ENCODE measurements at regions of chr12 and their contacts with region 1.

Region 1: DNA sequence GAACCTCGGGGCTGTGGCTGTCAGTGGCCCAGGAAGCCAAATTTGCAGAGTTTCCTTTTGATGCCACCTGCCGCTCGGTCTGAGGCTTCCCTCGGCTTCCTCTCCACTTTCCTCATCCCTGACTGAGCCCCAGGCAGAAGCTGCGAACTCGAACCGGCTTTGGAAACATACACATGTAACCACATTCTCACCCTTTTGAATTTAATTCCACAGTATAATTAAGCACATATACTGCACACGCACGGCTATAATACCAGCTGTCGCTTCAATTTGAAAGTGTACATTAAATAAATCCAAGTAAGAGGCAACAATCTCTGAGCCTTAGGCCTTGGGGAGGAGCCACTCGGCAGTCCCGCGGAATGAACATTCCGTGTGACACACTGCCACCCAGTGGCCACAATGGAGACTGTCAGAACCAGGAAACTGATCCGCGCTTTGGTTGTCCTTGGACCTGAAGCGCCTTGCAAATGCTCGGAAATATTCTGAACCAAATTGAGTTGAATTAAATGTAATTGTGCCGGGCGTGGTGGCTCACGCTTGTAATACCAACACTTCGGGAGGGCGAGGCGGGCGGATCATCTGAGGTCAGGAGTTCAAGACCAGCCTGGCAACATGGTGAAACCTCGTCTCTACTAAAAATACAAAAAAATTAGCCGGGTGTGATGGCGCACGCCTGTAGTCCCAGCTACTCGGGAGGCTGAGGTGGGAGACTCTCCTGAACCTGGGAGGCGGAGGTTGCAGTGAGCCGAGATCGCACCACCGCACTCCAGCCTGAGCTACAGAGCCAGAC is 117.9 kb upstream of the TMPO start:
- DNase-seq: peak; percentile 95
- H3K4me3 Mint-ChIP-seq: peak overlapping the region; percentile 72
- H3K27ac Mint-ChIP-seq: peak overlapping the region; percentile 10
- H3K4me1 Mint-ChIP-seq: peaks cover 35% of the 10 kb centered on the region
- H3K27me3 Mint-ChIP-seq: peaks cover 6% of the 10 kb centered on the region

Region 2: DNA sequence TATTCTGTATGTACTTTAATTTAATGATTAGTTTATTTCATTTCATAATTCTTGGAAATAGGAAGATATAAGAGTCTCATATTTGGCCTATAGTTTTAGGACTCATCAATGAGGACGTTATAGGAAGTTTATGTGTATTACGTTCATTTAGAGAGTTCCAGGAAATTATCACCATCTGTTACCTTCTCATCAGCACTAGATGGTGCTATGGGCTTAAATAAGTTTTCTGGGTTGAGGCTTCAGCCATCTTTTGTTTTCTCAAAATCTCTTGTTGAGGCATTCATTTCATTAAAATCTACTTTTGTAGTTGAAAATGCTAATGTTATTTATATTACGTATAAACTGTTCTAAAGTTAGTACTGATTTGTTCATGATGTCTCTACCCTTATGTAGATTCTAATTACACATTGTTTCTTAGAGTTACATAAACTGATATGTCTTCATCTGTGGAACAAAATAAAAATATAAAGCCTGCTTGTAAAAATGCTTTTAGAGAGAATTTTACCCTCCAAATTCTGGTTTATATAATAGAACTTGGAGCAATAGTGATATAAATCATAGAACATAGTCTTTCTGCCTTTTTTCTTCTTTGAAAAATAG is 1818.9 kb before region 1 on chr12:
- intact Hi-C with region 1: loop called (anchors 5 kb)
- DNase-seq: peak; percentile 74
- H3K4me3 Mint-ChIP-seq: no peak overlapping the region
- H3K27ac Mint-ChIP-seq: no peak overlapping the region
- H3K4me1 Mint-ChIP-seq: no peaks in the 10 kb centered on the region
- H3K27me3 Mint-ChIP-seq: peaks cover 11% of the 10 kb centered on the region

Region 3: DNA sequence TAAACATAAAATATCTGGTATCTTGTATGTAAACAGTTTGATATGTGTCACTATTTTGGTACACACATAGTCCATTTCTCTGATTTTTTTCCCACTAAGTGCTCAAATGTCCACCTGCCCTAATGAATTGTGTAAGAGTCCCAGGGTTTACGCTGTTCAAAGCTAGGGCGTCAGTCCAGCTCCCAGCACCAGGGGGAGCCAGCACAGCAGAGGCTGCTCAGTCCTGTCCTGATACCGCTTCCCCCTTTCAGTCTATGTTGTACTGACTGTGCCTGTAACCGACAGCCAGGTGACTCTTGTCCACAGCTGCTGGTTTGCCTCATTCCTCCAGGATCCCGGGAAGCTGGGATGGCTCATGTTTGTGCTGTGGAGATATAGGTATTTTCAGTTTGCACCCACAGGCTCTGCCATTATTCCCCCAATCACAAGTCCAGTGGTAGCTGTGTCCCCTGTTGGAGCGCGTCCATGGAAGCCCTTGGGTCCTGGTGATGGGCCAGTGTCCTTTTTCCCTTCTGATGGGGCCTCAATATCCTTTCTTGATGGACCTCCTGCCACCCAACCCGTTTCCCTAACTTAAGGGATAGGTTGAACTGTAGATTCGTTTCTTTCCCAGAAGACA is 1248.5 kb before region 1 on chr12:
- intact Hi-C with region 1: loop called (anchors 1 kb)
- DNase-seq: peak; percentile 84
- H3K4me3 Mint-ChIP-seq: no peak overlapping the region
- H3K27ac Mint-ChIP-seq: no peak overlapping the region
- H3K4me1 Mint-ChIP-seq: peaks cover 3% of the 10 kb centered on the region
- H3K27me3 Mint-ChIP-seq: peaks cover 2% of the 10 kb centered on the region

Region 4: GRCh38 chr12:97960754-97961608 is 436.5 kb before region 1 on chr12:
- intact Hi-C with region 1: loop called (anchors 10 kb)
- DNase-seq: peak; percentile 68
- H3K4me3 Mint-ChIP-seq: no peak overlapping the region
- H3K27ac Mint-ChIP-seq: no peak overlapping the region
- H3K4me1 Mint-ChIP-seq: no peaks in the 10 kb centered on the region
- H3K27me3 Mint-ChIP-seq: no peaks in the 10 kb centered on the region

Region 5: DNA sequence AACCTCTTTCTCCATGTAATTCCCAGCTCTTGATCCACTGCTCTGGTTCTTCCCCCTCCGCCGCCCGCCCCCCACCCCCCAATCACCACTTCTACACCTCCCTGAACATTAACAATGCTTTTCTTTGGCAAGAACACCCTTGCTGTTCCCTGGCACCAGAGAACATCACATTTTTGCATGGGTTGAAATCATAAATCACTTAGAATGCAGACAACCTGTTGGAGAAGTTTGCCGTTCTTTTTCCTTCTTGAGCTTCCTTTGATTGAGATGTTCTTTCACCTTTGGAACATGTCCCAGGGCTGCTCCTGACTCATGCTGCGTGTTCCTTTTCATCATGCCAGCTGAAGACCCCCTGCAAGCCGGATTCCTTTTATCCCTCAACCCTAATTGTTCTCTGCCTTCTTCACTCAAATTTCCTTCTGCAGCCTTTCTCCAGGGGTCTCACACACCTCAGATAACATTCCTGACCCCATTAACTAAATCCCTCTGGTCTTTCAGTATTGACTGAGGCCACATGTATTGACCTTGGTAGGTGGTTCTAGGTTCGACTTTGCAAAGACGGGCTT is 176.2 kb before region 1 on chr12:
- intact Hi-C with region 1: no loop called
- DNase-seq: no peak
- H3K4me3 Mint-ChIP-seq: no peak overlapping the region
- H3K27ac Mint-ChIP-seq: no peak overlapping the region
- H3K4me1 Mint-ChIP-seq: no peaks in the 10 kb centered on the region
- H3K27me3 Mint-ChIP-seq: peaks cover 8% of the 10 kb centered on the region